ENCODE measurements at regions of chr1 and their contacts with region 1.

Region 1: DNA sequence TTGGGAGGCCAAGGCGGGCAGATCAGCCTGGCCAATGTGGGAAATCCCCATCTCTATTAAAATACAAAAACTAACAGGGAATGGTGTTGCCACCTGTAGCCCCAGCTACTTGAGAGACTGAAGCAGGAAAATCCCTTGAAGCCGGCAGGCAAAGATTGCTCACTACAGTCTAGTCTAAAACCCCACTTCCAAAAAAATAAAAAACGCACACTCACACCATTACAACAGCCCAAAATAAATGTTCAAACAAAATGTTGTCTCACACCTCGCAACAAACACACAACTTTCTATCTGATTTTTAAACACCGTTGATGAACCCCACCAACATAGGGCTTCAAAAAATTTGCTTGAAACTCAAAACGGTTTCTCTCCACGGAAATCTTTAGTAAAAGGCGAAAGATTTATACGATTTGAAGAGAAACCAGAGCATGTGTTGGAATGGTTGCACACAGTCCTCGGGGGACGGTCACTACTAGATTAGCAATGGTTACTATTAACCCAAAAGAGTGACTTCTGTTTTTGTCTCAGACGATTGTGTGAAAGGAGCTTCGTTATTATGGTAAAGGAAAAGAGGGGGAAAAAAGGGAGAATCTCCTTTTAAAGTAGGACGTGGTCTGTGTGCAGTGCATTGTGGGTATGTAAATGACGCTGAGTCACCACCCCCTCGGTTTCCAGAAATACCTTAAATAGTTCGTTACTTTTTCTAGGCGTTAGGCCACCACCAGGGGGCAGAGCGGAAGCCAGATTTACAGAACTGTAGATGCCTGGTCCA is at the start of gene RNU5D-1:
- DNase-seq: peak; percentile 67
- H3K4me3 ChIP-seq: peak within 1 kb of the TSS in 3 of 4 donors; percentile 23 to 56 (median 25)
- H3K27ac ChIP-seq: peak within 1 kb of the TSS; percentile 83 to 95 (median 88)
- H3K4me1 ChIP-seq: peaks cover 0 to 34% (median 11%) of the 10 kb centered on the region in 3 donors
- H3K27me3 ChIP-seq: no peaks in the 10 kb centered on the region
- CTCF ChIP-seq: peak; percentile 81 to 95 (median 92)
- POLR2A ChIP-seq: peak; percentile 5 to 98 (median 43)
- total RNA-seq, gene RNU5D-1: not detected

Region 2: GRCh38 chr1:44775078-44775929 is 44.4 kb after region 1 on chr1 and contains the start of gene RPS8:
- intact Hi-C with region 1: loop called (anchors 5 kb)
- DNase-seq: peak; percentile 72
- H3K4me3 ChIP-seq: peak within 1 kb of the TSS; percentile 59 to 99 (median 81)
- H3K27ac ChIP-seq: peak within 1 kb of the TSS; percentile 92 to 100 (median 96)
- H3K4me1 ChIP-seq: peaks cover 17 to 46% (median 23%) of the 10 kb centered on the region in 3 donors
- H3K27me3 ChIP-seq: no peaks in the 10 kb centered on the region
- CTCF ChIP-seq: peak in 1 of 6 experiments; percentile 31
- POLR2A ChIP-seq: peak in 3 of 4 donors; percentile 93 to 98 (median 96)
- total RNA-seq, gene RPS8: 1,915 to 3,855 (median 2,689) TPM

Region 3: GRCh38 chr1:44903011-44903680 is 172.2 kb after region 1 on chr1:
- intact Hi-C with region 1: no loop called
- DNase-seq: no peak
- H3K4me3 ChIP-seq: no peak overlapping the region
- H3K27ac ChIP-seq: peak overlapping the region in 1 of 4 donors; percentile 22
- H3K4me1 ChIP-seq: peaks cover 0 to 5% (median 0%) of the 10 kb centered on the region in 3 donors
- H3K27me3 ChIP-seq: no peaks in the 10 kb centered on the region
- CTCF ChIP-seq: no peak
- POLR2A ChIP-seq: no peak